ENCODE measurements at regions of chr11 and their contacts with region 1.

Region 1: DNA sequence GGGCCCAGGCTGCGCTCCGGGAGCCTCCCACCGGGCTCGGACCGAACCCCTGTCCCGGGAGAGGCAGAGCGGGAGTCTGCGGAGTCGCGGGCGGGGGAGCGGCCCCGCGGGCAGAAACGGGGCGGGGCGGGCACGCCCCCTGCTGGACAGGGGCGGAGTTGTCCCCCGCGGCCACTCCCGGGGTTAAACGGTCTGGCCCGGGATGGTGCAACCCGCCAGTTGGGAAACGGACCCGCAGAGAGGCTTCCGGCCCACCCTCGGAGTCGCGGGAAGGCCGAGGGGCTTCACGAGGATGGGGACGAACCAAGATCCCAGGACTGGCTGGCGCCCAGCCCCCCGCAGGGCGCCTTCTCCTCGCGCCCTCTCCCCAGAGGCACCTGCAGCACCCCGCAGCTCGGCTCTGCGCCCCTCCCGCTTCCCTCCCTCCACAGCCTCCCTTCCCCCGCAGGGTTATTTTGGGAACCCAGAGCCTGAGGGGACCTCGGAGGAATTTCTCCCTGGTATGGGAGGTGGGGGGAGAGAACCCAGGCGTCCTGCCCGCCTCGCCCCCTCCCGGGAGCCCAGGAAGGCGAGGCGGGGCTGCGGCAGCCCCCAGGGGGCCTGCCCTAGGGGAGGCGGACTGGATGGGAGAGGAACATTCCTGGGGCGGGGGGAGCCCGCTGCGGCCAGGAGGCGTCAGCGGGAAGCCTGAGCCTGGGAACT is 902 bp downstream of the RASGRP2 start:
- DNase-seq: peak; percentile 83
- ATAC-seq: peak; percentile 12
- H3K4me3 Mint-ChIP-seq: peak overlapping the region; percentile 69; the same call in 1 of the 2 replicates
- H3K27ac Mint-ChIP-seq: no peak overlapping the region
- H3K4me1 Mint-ChIP-seq: peaks cover 39% of the 10 kb centered on the region
- H3K27me3 Mint-ChIP-seq: peaks cover 37% of the 10 kb centered on the region
- CTCF ChIP-seq: peak; percentile 99

Region 2: DNA sequence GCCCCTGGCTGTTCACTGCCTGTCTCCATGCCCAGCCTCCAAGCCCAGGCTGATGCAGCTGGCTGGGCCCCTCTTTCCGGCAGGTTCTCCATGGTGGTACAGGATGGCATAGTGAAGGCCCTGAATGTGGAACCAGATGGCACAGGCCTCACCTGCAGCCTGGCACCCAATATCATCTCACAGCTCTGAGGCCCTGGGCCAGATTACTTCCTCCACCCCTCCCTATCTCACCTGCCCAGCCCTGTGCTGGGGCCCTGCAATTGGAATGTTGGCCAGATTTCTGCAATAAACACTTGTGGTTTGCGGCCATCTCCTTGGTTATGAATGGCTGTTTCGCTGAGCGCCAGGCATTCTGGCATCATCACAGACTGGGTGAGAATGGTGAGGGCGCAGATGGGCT is 421.5 kb before region 1 on chr11:
- CTCF ChIA-PET with region 1: no interaction called
- POLR2A ChIA-PET with region 1: no interaction called
- DNase-seq: no peak
- ATAC-seq: no peak
- H3K4me3 Mint-ChIP-seq: no peak overlapping the region
- H3K27ac Mint-ChIP-seq: no peak overlapping the region
- H3K4me1 Mint-ChIP-seq: peaks cover 17% of the 10 kb centered on the region
- H3K27me3 Mint-ChIP-seq: 0 out of 2 replicates have a peak, but pooled peaks cover under 1% of the 10 kb centered on the region
- CTCF ChIP-seq: no peak

Region 3: GRCh38 chr11:64545605-64546004 is 197.4 kb before region 1 on chr11:
- CTCF ChIA-PET with region 1: no interaction called
- POLR2A ChIA-PET with region 1: no interaction called
- DNase-seq: no peak
- ATAC-seq: no peak
- H3K4me3 Mint-ChIP-seq: no peak overlapping the region
- H3K27ac Mint-ChIP-seq: no peak overlapping the region
- H3K4me1 Mint-ChIP-seq: no peaks in the 10 kb centered on the region
- H3K27me3 Mint-ChIP-seq: peaks cover 11% of the 10 kb centered on the region
- CTCF ChIP-seq: no peak

Region 4: GRCh38 chr11:64652586-64653387 is 90.3 kb before region 1 on chr11:
- CTCF ChIA-PET with region 1: interaction called, 25 read pairs
- POLR2A ChIA-PET with region 1: interaction called, 3 read pairs
- DNase-seq: peak; percentile 97
- ATAC-seq: peak; percentile 79
- H3K4me3 Mint-ChIP-seq: peak overlapping the region; percentile 20; the same call in 1 of the 2 replicates
- H3K27ac Mint-ChIP-seq: no peak overlapping the region
- H3K4me1 Mint-ChIP-seq: peaks cover 12% of the 10 kb centered on the region
- H3K27me3 Mint-ChIP-seq: peaks cover 14% of the 10 kb centered on the region
- CTCF ChIP-seq: peak; percentile 80

Region 5: DNA sequence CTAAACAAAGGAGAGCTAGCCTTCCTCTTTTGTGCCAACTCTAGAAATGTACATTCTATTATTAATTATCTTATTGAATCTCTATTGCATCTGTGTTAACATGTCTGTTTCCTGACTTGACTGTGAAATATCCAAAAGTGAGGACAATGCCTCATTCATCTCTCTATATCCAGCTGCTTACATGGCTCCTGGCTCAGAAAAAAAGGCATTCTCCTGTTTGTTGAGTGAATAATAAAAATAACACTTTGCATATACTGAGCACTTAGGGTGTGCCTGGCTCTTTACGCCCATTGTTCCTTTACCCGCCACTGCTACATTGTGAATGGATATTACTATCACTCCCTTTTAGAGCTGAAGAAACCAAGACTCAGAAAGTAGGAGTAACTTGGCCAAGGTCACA is 40.0 kb before region 1 on chr11:
- CTCF ChIA-PET with region 1: interaction called, 20 read pairs
- POLR2A ChIA-PET with region 1: interaction called, 6 read pairs
- DNase-seq: no peak
- ATAC-seq: no peak
- H3K4me3 Mint-ChIP-seq: no peak overlapping the region
- H3K27ac Mint-ChIP-seq: no peak overlapping the region
- H3K4me1 Mint-ChIP-seq: no peaks in the 10 kb centered on the region; the same call in 1 of the 2 replicates
- H3K27me3 Mint-ChIP-seq: peaks cover 35% of the 10 kb centered on the region
- CTCF ChIP-seq: no peak

Region 6: GRCh38 chr11:64723117-64723906 is 19.7 kb before region 1 on chr11 and contains the start of gene NRXN2:
- CTCF ChIA-PET with region 1: interaction called, 43 read pairs
- POLR2A ChIA-PET with region 1: interaction called, 5 read pairs
- DNase-seq: peak; percentile 87
- ATAC-seq: peak; percentile 88
- H3K4me3 Mint-ChIP-seq: peak within 1 kb of the TSS; percentile 50
- H3K27ac Mint-ChIP-seq: no peak within 1 kb of the TSS
- H3K4me1 Mint-ChIP-seq: peaks cover 44% of the 10 kb centered on the region
- H3K27me3 Mint-ChIP-seq: peaks cover 47% of the 10 kb centered on the region
- CTCF ChIP-seq: peak; percentile 93
- total RNA-seq, gene NRXN2: 8.0 to 10.4 TPM (median 8.6 TPM) in 3 replicates

Region 7: GRCh38 chr11:64762674-64763525 is 19.9 kb after region 1 on chr11:
- CTCF ChIA-PET with region 1: interaction called, 150 read pairs
- POLR2A ChIA-PET with region 1: interaction called, 10 read pairs
- DNase-seq: peak; percentile 53
- ATAC-seq: peak; percentile 18
- H3K4me3 Mint-ChIP-seq: peak overlapping the region; percentile 43
- H3K27ac Mint-ChIP-seq: peak overlapping the region; percentile 98
- H3K4me1 Mint-ChIP-seq: peaks cover 88% of the 10 kb centered on the region
- H3K27me3 Mint-ChIP-seq: no peaks in the 10 kb centered on the region
- CTCF ChIP-seq: no peak

Region 8: DNA sequence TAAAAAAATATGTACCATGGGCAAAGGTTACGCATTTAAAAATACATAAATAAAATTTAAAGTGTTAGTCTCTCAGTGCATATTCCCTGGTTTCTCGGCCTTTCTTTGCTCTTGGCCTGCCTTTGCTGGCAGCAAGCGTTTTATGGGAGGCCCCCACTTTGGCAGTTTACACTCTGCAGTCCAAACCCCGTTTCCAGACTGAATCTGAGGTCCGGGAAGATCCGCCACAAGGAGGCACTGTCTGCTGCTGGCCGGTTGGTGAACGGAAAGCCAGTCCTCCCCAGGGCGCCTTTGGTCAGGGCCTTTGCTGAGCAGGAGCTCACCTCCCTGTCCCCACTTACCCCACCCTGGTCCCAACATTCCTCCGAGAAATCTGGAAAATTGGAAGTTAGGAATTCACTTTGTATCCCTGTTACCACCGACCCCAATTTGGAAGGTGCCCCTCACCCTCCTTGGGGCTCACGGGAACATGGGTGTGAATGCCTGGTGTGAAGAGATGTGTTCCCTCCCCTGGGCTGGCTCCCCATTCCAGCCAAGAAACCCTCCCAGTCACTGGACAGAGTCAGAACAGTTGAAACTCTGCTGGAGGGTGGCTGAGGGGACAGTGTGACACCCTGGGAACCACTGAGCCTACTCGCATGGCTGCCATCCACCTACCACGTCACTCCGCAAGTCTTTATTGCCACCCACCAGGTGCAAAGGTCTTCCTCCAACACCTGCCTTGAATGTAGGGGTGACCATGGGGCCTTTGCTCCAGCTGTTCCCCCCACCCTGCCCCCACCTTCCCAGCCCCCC is 44.7 kb after region 1 on chr11:
- CTCF ChIA-PET with region 1: interaction called, 11 read pairs
- POLR2A ChIA-PET with region 1: no interaction called
- DNase-seq: peak; percentile 85
- ATAC-seq: peak; percentile 91
- H3K4me3 Mint-ChIP-seq: no peak overlapping the region
- H3K27ac Mint-ChIP-seq: no peak overlapping the region
- H3K4me1 Mint-ChIP-seq: no peaks in the 10 kb centered on the region
- H3K27me3 Mint-ChIP-seq: no peaks in the 10 kb centered on the region
- CTCF ChIP-seq: peak; percentile 40

Region 9: GRCh38 chr11:64831411-64831891 is 88.4 kb after region 1 on chr11:
- CTCF ChIA-PET with region 1: no interaction called
- POLR2A ChIA-PET with region 1: no interaction called
- DNase-seq: no peak
- ATAC-seq: no peak
- H3K4me3 Mint-ChIP-seq: no peak overlapping the region
- H3K27ac Mint-ChIP-seq: no peak overlapping the region
- H3K4me1 Mint-ChIP-seq: no peaks in the 10 kb centered on the region
- H3K27me3 Mint-ChIP-seq: no peaks in the 10 kb centered on the region
- CTCF ChIP-seq: no peak

Region 10: GRCh38 chr11:64905516-64906313 is 162.7 kb after region 1 on chr11:
- CTCF ChIA-PET with region 1: no interaction called
- POLR2A ChIA-PET with region 1: no interaction called
- DNase-seq: no peak
- ATAC-seq: no peak
- H3K4me3 Mint-ChIP-seq: no peak overlapping the region
- H3K27ac Mint-ChIP-seq: 0 out of 2 replicates have a peak overlapping the region, but pooled peaks have one; percentile 32
- H3K4me1 Mint-ChIP-seq: no peaks in the 10 kb centered on the region
- H3K27me3 Mint-ChIP-seq: no peaks in the 10 kb centered on the region
- CTCF ChIP-seq: no peak